ENCODE measurements at regions of chr6 and their contacts with region 1.

Region 1: GRCh38 chr6:166275714-166276166 is 32.5 kb downstream of the PRR18 start:
- DNase-seq: peak; percentile 15
- ATAC-seq: peak; percentile 97
- H3K4me3 ChIP-seq: no peak overlapping the region
- H3K27ac ChIP-seq: no peak overlapping the region
- H3K4me1 ChIP-seq: no peaks in the 10 kb centered on the region
- H3K27me3 ChIP-seq: peaks cover 10% of the 10 kb centered on the region; the same call in 1 of the 2 replicates
- CTCF ChIP-seq: peak; percentile 98
- POLR2A ChIP-seq: no peak
- RAD21 ChIP-seq: peak; percentile 89

Region 2: DNA sequence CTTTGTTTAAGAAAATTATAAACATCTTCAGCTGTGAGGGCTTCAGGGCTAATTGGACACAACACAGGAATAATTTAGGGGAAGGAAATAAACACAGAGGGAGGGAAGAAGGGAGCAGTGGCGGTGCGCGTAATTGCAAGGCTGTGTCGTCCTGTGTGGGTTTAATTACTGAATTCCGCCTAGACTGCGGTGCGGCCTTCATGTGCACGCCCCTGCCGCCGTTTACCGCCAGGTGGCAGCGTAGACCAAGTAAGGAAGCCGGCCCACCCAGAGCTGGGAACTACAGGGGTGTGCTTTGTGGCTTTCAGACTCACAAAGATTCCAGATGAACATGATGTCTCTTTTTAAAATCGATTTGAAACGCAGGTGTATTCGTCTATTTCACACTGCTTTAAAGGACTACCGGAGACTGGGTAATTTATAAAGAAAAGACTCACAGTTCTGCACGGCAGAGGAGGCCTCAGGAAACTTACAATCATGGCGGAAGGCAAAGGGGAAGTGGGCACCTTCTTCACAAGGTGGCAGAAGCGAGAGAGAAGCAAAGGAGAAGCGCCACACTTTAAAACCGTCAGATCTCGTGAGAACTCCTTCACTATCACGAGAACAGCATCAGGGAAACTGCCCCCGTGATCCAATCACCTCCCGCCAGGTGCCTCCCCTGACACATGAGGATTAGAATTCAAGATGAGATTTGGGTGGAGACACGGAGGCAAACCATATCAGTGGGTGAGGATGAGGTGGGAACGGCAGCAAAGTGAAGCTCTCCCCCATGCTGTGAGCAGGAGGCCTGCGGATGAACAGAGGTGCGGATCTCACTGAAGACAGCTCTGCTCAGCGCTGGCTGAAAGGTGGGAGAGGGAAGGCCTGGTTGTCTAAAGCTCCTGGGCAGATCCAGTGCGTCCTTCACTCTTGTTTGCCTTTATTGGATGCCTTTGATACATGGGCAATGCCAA is 390.7 kb before region 1 on chr6:
- CTCF ChIA-PET with region 1: no interaction called
- POLR2A ChIA-PET with region 1: no interaction called
- dilution Hi-C with region 1: no loop called
- in situ Hi-C with region 1: no loop called
- intact Hi-C with region 1: loop called (anchors 5 kb)
- DNase-seq: peak; percentile 68
- ATAC-seq: peak; percentile 96
- H3K4me3 ChIP-seq: no peak overlapping the region
- H3K27ac ChIP-seq: no peak overlapping the region
- H3K4me1 ChIP-seq: peaks cover 7% of the 10 kb centered on the region
- H3K27me3 ChIP-seq: no peaks in the 10 kb centered on the region
- CTCF ChIP-seq: peak; percentile 95
- POLR2A ChIP-seq: peak; percentile 46; the same call in 1 of the 2 replicates
- RAD21 ChIP-seq: peak; percentile 95

Region 3: GRCh38 chr6:166005944-166006899 is 269.5 kb before region 1 on chr6:
- CTCF ChIA-PET with region 1: no interaction called
- POLR2A ChIA-PET with region 1: no interaction called
- dilution Hi-C with region 1: no loop called
- in situ Hi-C with region 1: no loop called
- intact Hi-C with region 1: no loop called
- DNase-seq: peak; percentile 94
- ATAC-seq: peak; percentile 65
- H3K4me3 ChIP-seq: peak overlapping the region; percentile 26
- H3K27ac ChIP-seq: peak overlapping the region; percentile 98
- H3K4me1 ChIP-seq: peaks cover 31% of the 10 kb centered on the region
- H3K27me3 ChIP-seq: no peaks in the 10 kb centered on the region
- CTCF ChIP-seq: no peak
- POLR2A ChIP-seq: no peak; the same call in 1 of the 2 replicates
- RAD21 ChIP-seq: peak; percentile 12; the same call in 1 of the 2 replicates

Region 4: GRCh38 chr6:166395356-166395755 is 119.6 kb after region 1 on chr6:
- CTCF ChIA-PET with region 1: interaction called, 20 read pairs
- POLR2A ChIA-PET with region 1: no interaction called
- dilution Hi-C with region 1: no loop called
- in situ Hi-C with region 1: loop called (anchors 5 kb)
- intact Hi-C with region 1: loop called (anchors 1 kb)
- DNase-seq: no peak
- ATAC-seq: no peak
- H3K4me3 ChIP-seq: no peak overlapping the region
- H3K27ac ChIP-seq: no peak overlapping the region
- H3K4me1 ChIP-seq: no peaks in the 10 kb centered on the region
- H3K27me3 ChIP-seq: peaks cover 28% of the 10 kb centered on the region
- CTCF ChIP-seq: no peak
- POLR2A ChIP-seq: no peak
- RAD21 ChIP-seq: no peak

Measured in IMR-90 (cell line).